ENCODE measurements at regions of chr14 and their contacts with region 1.

Region 1: DNA sequence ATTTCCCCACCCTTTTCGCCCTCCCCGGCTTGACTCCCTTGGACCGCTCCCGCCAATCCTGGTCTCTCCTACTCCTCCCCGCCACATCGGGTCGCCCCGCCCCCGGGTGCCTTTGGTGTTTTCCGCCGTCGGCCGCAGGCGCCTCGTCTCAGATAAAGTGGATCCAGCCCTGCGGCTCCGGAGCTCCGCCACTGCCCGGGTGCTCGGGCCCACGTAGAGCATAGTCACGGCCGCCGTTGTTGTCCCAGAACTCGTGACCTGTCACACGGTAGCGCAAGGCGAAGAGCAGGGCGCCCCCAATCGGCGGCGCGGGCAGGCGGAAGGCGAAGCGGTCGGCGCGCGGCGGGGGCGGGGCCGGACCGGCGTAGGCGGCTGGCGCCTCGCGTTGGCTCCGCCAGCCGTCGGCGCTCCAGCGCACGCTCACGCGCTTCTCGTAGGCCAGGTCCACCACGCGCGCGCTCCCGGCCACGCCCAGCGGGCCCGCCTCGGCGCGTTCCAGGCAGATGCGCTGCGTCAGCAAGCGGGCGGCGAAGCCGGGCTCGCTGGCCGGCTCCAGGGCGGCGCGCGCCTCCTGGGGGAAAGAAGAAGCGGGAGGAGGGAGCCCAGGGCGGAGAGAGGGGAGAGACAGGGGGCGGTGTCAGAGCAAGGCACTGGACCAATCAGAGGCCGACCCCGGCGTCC is 1.2 kb downstream of the PPP1R3E start:
- DNase-seq: peak; percentile 99
- H3K4me3 ChIP-seq: peak overlapping the region; percentile 30 to 79 (median 76)
- H3K27ac ChIP-seq: peak overlapping the region; percentile 75
- H3K4me1 ChIP-seq: peaks cover 18% of the 10 kb centered on the region
- H3K27me3 ChIP-seq: no peaks in the 10 kb centered on the region
- CTCF ChIP-seq: peak; percentile 79 to 91
- POLR2A ChIP-seq: no peak

Region 2: GRCh38 chr14:23269193-23269592 is 32.2 kb before region 1 on chr14:
- CTCF ChIA-PET with region 1: interaction called, 17 read pairs
- POLR2A ChIA-PET with region 1: no interaction called
- dilution Hi-C with region 1: no loop called
- intact Hi-C with region 1: loop called (anchors 1 kb)
- DNase-seq: no peak
- H3K4me3 ChIP-seq: no peak overlapping the region
- H3K27ac ChIP-seq: no peak overlapping the region
- H3K4me1 ChIP-seq: no peaks in the 10 kb centered on the region
- H3K27me3 ChIP-seq: peaks cover 2 to 7% of the 10 kb centered on the region in 2 experiments
- CTCF ChIP-seq: no peak
- POLR2A ChIP-seq: no peak

Region 3: GRCh38 chr14:23286020-23286905 is 15.2 kb before region 1 on chr14 and contains the start of gene HOMEZ:
- CTCF ChIA-PET with region 1: interaction called, 36 read pairs
- POLR2A ChIA-PET with region 1: interaction called, 5 read pairs
- dilution Hi-C with region 1: no loop called
- intact Hi-C with region 1: loop called (anchors 1 kb)
- DNase-seq: peak; percentile 99
- H3K4me3 ChIP-seq: peak within 1 kb of the TSS; percentile 79 to 98 (median 94)
- H3K27ac ChIP-seq: peak within 1 kb of the TSS; percentile 65
- H3K4me1 ChIP-seq: peaks cover 21% of the 10 kb centered on the region
- H3K27me3 ChIP-seq: peaks cover 2 to 12% of the 10 kb centered on the region in 2 experiments
- CTCF ChIP-seq: no peak
- POLR2A ChIP-seq: peak; percentile 84
- total RNA-seq, gene HOMEZ: 11.3 and 11.7 TPM in 2 replicates

Region 4: DNA sequence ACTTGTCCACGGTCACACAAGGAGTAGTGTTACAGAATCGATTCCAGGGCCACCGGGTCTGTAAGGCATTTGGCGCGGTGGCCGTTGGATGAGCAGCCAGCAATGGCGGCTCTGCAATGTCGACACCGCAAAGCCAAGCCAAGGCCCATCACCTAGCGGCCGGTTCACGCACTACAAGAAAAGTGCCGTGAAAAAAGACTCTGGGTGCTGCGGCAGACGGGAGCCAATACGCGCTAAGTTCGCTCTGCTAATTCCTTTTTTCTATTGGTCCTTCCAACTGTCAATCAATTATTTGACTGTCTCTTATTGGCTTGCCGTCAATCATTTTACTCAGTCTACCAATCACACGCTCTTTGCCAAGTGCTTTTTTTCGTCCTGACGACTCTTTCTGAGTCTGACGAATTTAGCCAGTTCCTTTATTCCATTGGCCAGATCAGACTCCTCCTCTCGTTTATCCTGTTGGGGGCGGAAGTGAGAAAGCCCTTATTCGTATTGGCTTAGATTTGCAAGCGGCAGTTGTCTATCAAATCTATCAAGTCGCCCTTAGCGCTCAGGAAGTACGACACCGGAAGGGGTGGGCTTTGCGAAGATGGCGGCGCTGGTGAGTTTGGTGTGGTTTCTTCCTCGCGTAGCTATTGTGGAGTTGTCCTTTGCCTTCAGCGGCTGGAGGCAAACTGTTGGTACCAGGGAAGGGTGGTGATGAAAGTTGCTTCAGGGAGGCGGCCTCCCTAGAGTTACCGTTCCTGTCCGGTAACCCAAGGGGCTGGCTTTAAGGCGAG is 167.9 kb after region 1 on chr14 and contains the start of gene NGDN:
- CTCF ChIA-PET with region 1: no interaction called
- POLR2A ChIA-PET with region 1: no interaction called
- dilution Hi-C with region 1: no loop called
- intact Hi-C with region 1: loop called (anchors 1 kb)
- DNase-seq: peak; percentile 100
- H3K4me3 ChIP-seq: peak within 1 kb of the TSS; percentile 73 to 91 (median 83)
- H3K27ac ChIP-seq: peak within 1 kb of the TSS; percentile 78
- H3K4me1 ChIP-seq: peaks cover 5% of the 10 kb centered on the region
- H3K27me3 ChIP-seq: no peaks in the 10 kb centered on the region
- CTCF ChIP-seq: peak; percentile 79 to 83
- POLR2A ChIP-seq: peak; percentile 52
- total RNA-seq, gene NGDN: 36.3 and 36.5 TPM in 2 replicates

Measured in endothelial cell of umbilical vein (primary cell).